Colonic mucosa (tissue), 4 donors: ENCODE measurements at regions of chr10 and their contacts with region 1.

Region 1: DNA sequence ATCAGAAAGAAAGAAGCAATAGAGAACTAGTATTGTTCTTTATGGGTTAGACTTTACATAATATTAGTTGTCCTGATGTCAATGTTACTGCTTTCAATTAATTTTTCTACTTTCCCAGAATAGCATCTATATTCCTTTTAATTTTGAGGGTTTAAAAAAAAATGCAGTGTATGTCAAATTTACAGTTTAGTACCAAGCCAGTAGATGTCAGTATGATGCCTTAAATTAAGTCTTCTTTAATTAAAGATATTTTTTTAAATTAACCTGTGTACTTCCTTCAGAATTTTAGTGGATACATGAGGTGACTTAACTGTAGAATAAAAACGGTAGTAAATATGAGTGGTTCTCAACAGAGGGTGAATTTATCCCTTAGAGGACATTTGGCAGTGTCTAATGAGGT is 35.2 kb upstream of the STOX1 start:
- DNase-seq: no peak
- H3K4me3 ChIP-seq: no peak overlapping the region
- H3K27ac ChIP-seq: no peak overlapping the region
- H3K4me1 ChIP-seq: no peaks in the 10 kb centered on the region
- H3K27me3 ChIP-seq: no peaks in the 10 kb centered on the region
- CTCF ChIP-seq: no peak

Region 2: DNA sequence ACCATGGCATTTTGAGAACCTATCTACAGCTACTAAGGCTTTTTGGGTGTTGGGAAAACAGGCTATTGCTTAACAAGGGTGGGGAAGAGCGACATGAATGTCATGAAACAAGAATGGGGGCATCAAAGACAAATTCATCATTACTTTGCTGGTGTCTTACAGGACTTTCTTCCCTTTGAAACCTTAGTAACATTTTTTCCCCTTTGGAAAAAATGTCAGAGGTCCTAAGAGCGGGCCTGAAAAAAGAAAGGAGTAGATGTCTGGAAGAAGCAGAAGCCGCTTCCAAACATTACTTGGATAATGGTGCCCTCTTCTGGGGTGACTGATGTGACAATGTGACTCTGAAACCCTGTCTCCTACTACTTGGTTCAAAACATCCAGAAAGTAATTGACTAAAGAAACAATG is 105.2 kb after region 1 on chr10:
- intact Hi-C with region 1: loop called (anchors 5 kb)
- DNase-seq: peak; percentile 73
- H3K4me3 ChIP-seq: no peak overlapping the region
- H3K27ac ChIP-seq: no peak overlapping the region
- H3K4me1 ChIP-seq: no peaks in the 10 kb centered on the region
- H3K27me3 ChIP-seq: no peaks in the 10 kb centered on the region
- CTCF ChIP-seq: no peak